Thyroid gland (tissue), 4 donors: ENCODE measurements at regions of chr13 and their contacts with region 1.

Region 1: DNA sequence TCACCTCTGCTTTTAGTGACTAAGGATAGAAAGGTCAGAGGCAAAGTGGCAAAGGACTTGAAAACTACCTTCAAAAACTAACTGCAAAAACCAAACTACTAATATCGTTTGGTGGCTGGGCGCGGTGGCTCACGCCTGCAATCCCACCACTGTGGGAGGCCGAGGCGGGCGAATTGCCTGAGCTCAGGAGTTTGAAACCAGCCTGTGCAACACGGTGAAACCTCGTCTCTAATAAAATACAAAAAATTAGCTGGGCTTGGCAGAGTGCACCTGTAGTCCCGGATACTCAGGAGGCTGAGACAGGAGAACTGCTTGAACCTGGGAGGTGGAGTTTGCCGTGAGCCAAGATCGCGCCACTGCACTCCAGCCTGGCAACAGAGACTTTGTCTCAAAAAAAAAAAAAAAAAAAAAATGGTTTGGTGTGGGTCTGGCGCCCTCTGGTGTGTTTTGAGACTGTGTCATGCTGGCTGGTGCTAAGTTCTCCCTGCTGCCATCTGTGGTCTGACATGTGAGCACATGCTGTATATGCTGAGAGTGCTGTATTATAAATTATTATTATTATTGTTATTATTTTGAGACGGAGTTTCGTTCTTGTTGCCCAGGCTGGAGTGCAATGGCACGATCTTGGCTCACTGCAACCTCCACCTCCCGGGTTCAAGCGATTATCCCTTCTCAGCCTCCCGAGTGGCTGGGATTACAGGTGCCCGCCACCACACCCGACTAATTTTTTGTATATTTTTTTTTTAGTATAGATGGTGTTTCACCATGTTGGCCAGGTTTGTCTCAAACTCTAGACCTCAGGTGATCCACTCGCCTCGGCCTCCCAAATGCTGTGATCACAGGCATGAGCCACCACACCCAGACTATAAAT is 36.0 kb upstream of the RNF17 start:
- DNase-seq: peak; percentile 72 to 73
- H3K4me3 ChIP-seq: no peak overlapping the region
- H3K27ac ChIP-seq: no peak overlapping the region
- H3K4me1 ChIP-seq: no peaks in the 10 kb centered on the region
- H3K27me3 ChIP-seq: no peaks in the 10 kb centered on the region
- CTCF ChIP-seq: peak; percentile 50 to 99 (median 80)
- POLR2A ChIP-seq: no peak

Region 2: GRCh38 chr13:24693862-24694471 is 34.0 kb before region 1 on chr13:
- intact Hi-C with region 1: loop called (anchors 2 kb)
- DNase-seq: peak; percentile 65 to 67
- H3K4me3 ChIP-seq: no peak overlapping the region
- H3K27ac ChIP-seq: no peak overlapping the region
- H3K4me1 ChIP-seq: no peaks in the 10 kb centered on the region
- H3K27me3 ChIP-seq: no peaks in the 10 kb centered on the region
- CTCF ChIP-seq: peak in 5 of 6 experiments; percentile 45 to 80 (median 76)
- POLR2A ChIP-seq: no peak

Region 3: DNA sequence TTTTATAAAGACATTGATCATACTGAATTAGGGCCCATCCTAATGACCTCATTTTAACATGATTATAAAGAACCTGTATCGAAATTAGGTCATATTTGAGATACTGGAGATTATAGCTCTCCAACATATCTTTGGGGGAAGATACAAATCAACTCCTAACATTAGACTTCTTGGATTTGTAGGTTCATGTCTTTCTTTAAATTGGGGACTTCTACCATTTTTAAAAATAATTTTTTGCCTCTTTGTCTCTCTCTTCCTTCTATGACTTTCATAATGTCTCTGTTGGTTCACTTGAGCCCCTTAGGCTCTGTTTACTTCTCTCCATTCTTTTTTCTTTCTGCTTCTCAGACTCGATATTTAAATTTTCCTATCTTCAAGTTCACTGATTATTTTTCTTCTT is 93.2 kb after region 1 on chr13:
- intact Hi-C with region 1: no loop called
- DNase-seq: no peak
- H3K4me3 ChIP-seq: no peak overlapping the region
- H3K27ac ChIP-seq: no peak overlapping the region
- H3K4me1 ChIP-seq: no peaks in the 10 kb centered on the region
- H3K27me3 ChIP-seq: no peaks in the 10 kb centered on the region
- CTCF ChIP-seq: no peak
- POLR2A ChIP-seq: no peak